CD4-positive, alpha-beta T cell (primary cell): ENCODE measurements at regions of chr1 and their contacts with region 1.

Region 1: DNA sequence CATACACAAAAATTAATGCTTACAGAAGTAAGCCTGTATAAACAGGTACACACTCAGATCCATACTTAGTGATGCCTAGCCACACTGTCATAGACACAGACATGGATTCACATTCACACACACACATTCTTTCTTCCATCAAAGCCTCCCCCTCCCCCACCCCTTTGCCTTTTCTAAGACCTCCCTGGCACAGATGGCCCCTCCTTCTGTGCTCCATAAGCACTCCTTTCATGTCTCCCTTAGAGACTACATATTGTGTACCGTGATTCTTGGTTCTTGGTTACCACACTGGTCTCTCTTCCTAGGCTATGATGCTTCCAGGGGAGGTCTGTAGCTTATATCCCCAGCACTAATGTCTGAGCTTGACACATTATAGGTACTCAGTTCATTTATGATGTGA is 2.0 kb upstream of the NHLH2 start:
- DNase-seq: no peak
- ATAC-seq: no peak
- H3K4me3 ChIP-seq: no peak overlapping the region
- H3K4me3 Mint-ChIP-seq: no peak overlapping the region
- H3K27ac ChIP-seq: no peak overlapping the region
- H3K27ac Mint-ChIP-seq: no peak overlapping the region
- H3K4me1 ChIP-seq: peaks cover 12% of the 10 kb centered on the region
- H3K4me1 Mint-ChIP-seq: peaks cover 10% of the 10 kb centered on the region
- H3K27me3 ChIP-seq: peaks cover 38 to 54% of the 10 kb centered on the region in 2 experiments
- H3K27me3 Mint-ChIP-seq: peaks cover 62% of the 10 kb centered on the region
- CTCF ChIP-seq: no peak

Region 2: DNA sequence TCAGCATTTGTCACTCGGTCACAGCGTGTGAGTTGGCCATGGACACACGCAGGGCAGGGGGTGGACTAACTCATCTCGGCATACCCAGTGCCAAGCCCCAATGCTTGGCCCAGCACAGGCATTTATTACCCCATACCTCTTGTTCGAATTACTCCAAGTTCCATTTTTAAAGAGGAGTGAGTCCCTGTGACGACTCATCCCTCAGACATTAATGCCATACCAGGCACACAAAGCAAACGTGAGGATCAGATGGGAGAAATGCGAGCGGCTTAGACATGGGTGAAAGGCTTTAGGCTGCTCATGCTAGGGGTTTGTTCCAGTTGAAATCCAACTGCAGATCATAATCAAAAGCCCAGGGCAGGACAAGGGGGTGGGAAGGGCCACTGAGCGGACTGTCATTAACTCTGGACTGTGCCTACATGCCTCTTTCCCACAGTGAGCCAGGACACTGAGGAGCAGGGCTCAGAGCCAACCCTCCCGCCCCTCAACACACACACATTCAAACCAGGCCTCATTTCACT is 386.4 kb before region 1 on chr1:
- CTCF ChIA-PET with region 1: no interaction called
- POLR2A ChIA-PET with region 1: no interaction called
- intact Hi-C with region 1: no loop called
- DNase-seq: no peak
- ATAC-seq: no peak
- H3K4me3 ChIP-seq: no peak overlapping the region
- H3K4me3 Mint-ChIP-seq: no peak overlapping the region
- H3K27ac ChIP-seq: no peak overlapping the region
- H3K27ac Mint-ChIP-seq: no peak overlapping the region
- H3K4me1 ChIP-seq: no peaks in the 10 kb centered on the region
- H3K4me1 Mint-ChIP-seq: no peaks in the 10 kb centered on the region
- H3K27me3 ChIP-seq: peaks cover 0 to 2% of the 10 kb centered on the region in 2 experiments
- H3K27me3 Mint-ChIP-seq: no peaks in the 10 kb centered on the region
- CTCF ChIP-seq: no peak

Region 3: DNA sequence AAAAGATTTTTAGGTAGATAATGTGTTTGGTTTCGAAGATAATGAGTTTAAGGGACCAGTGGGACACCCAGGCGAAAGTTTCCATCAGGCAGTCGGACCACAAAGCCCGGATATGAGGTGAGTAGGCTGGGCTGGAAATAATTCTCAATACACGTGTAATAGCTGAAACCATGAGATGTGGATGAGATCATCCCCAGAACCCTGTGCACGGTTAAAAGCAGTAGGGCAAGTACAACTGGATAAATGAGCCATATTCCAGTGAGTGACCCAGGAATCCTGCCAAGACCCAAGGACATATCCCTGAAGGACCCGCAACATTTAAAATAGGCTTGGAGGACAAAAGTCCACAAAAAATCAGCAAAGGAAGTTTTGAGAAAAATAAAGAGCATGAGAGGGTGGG is 19.5 kb after region 1 on chr1:
- CTCF ChIA-PET with region 1: no interaction called
- POLR2A ChIA-PET with region 1: no interaction called
- intact Hi-C with region 1: loop called in 1 of 2 experiments (anchors 2 kb)
- DNase-seq: no peak
- ATAC-seq: no peak
- H3K4me3 ChIP-seq: no peak overlapping the region
- H3K4me3 Mint-ChIP-seq: no peak overlapping the region
- H3K27ac ChIP-seq: no peak overlapping the region
- H3K27ac Mint-ChIP-seq: no peak overlapping the region
- H3K4me1 ChIP-seq: no peaks in the 10 kb centered on the region
- H3K4me1 Mint-ChIP-seq: no peaks in the 10 kb centered on the region
- H3K27me3 ChIP-seq: peaks cover 9 to 19% of the 10 kb centered on the region in 2 experiments
- H3K27me3 Mint-ChIP-seq: peaks cover 53% of the 10 kb centered on the region
- CTCF ChIP-seq: no peak

Region 4: GRCh38 chr1:115933625-115934024 is 90.7 kb after region 1 on chr1:
- CTCF ChIA-PET with region 1: no interaction called
- POLR2A ChIA-PET with region 1: no interaction called
- intact Hi-C with region 1: no loop called
- DNase-seq: no peak
- ATAC-seq: no peak
- H3K4me3 ChIP-seq: no peak overlapping the region
- H3K4me3 Mint-ChIP-seq: no peak overlapping the region
- H3K27ac ChIP-seq: no peak overlapping the region
- H3K27ac Mint-ChIP-seq: no peak overlapping the region
- H3K4me1 ChIP-seq: no peaks in the 10 kb centered on the region
- H3K4me1 Mint-ChIP-seq: no peaks in the 10 kb centered on the region
- H3K27me3 ChIP-seq: no peaks in the 10 kb centered on the region
- H3K27me3 Mint-ChIP-seq: peaks cover 10% of the 10 kb centered on the region
- CTCF ChIP-seq: no peak

Region 5: DNA sequence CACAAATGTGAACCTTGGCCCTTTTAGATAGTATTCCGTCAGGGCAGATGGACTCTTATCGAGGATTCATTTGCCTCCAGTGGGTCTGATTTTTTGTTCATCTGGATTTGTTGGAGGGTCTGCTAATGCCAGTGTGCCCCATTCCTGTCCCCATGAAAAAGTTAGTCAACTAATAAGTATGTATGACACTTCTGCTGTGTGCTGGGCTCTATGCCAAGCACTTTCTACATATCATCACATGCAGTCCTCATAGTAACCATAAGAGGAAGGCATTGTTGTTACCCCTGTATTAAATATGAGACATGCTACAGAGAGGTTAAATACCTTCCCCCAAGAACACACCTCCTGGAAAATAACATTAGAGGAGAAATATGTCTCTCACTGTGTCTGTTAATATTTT is 221.7 kb after region 1 on chr1:
- CTCF ChIA-PET with region 1: no interaction called
- POLR2A ChIA-PET with region 1: no interaction called
- intact Hi-C with region 1: no loop called
- DNase-seq: no peak
- ATAC-seq: no peak
- H3K4me3 ChIP-seq: no peak overlapping the region
- H3K4me3 Mint-ChIP-seq: no peak overlapping the region
- H3K27ac ChIP-seq: no peak overlapping the region
- H3K27ac Mint-ChIP-seq: no peak overlapping the region
- H3K4me1 ChIP-seq: no peaks in the 10 kb centered on the region
- H3K4me1 Mint-ChIP-seq: no peaks in the 10 kb centered on the region
- H3K27me3 ChIP-seq: peaks cover 0 to 5% of the 10 kb centered on the region in 2 experiments
- H3K27me3 Mint-ChIP-seq: peaks cover 18% of the 10 kb centered on the region
- CTCF ChIP-seq: no peak